CD8-positive, alpha-beta T cell (primary cell): ENCODE measurements at regions of chr17 and their contacts with region 1.

Region 1: DNA sequence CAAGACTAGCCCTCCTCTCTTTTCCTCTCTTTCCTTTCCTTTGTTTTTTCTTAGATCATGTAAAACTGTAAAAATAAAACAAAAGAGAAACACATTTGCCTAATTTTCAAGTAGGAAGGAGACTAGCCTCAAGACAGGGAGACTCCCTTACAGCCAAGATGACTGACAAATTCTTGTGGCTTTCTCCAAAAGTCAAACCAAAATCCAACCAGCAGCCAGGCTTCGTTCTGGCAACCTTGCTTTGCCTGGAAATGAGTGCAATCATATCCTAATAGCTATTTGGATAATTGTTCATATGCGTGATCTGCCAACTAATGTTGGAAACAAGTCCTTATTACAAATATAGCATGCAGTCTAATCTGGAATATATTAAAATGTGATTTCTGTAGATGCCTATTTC is 868.9 kb upstream of the SOX9 start:
- DNase-seq: no peak
- ATAC-seq: no peak
- H3K4me3 ChIP-seq: no peak overlapping the region
- H3K4me3 Mint-ChIP-seq: no peak overlapping the region
- H3K27ac ChIP-seq: no peak overlapping the region
- H3K27ac Mint-ChIP-seq: no peak overlapping the region
- H3K4me1 ChIP-seq: no peaks in the 10 kb centered on the region
- H3K4me1 Mint-ChIP-seq: no peaks in the 10 kb centered on the region
- H3K27me3 ChIP-seq: no peaks in the 10 kb centered on the region
- H3K27me3 Mint-ChIP-seq: no peaks in the 10 kb centered on the region
- CTCF ChIP-seq: no peak

Region 2: GRCh38 chr17:71304498-71305158 is 52.7 kb after region 1 on chr17:
- CTCF ChIA-PET with region 1: no interaction called
- POLR2A ChIA-PET with region 1: no interaction called
- intact Hi-C with region 1: loop called in 1 of 2 experiments (anchors 5 kb)
- DNase-seq: no peak
- ATAC-seq: no peak
- H3K4me3 ChIP-seq: no peak overlapping the region
- H3K4me3 Mint-ChIP-seq: no peak overlapping the region
- H3K27ac ChIP-seq: no peak overlapping the region
- H3K27ac Mint-ChIP-seq: no peak overlapping the region
- H3K4me1 ChIP-seq: no peaks in the 10 kb centered on the region
- H3K4me1 Mint-ChIP-seq: no peaks in the 10 kb centered on the region
- H3K27me3 ChIP-seq: no peaks in the 10 kb centered on the region
- H3K27me3 Mint-ChIP-seq: no peaks in the 10 kb centered on the region
- CTCF ChIP-seq: no peak